ENCODE measurements at regions of chrX and their contacts with region 1.

Region 1: DNA sequence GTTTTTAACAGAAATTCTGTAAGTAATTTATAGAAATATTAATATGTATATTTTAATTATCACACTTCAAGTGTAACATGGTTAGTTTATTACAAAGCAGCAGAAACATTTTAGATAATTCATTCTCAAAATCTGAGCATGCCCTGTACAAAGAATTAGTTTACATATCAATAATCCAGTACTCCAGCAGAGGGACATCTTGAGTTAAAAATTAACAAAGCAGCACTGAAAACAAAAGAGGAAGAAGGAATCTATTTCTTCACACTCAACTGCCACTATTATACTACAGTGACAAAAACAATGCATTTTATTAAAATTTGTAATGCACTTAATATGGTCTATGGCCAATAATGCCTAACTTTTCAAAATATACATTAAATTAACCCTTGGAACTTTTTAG is 179.1 kb upstream of the KLHL4 start:
- DNase-seq: peak in 2 of 4 experiments; percentile 2 to 20
- ATAC-seq: peak; percentile 53; the same call in 1 of the 3 replicates
- H3K4me3 ChIP-seq: no peak overlapping the region
- H3K27ac ChIP-seq: no peak overlapping the region
- H3K4me1 ChIP-seq: no peaks in the 10 kb centered on the region
- H3K27me3 ChIP-seq: no peaks in the 10 kb centered on the region
- CTCF ChIP-seq: peak in 1 of 3 experiments; percentile 34; a peak in 1 of 6 replicates
- EP300 ChIP-seq: no peak
- POLR2A ChIP-seq: no peak
- RAD21 ChIP-seq: peak; percentile 57 to 66

Region 2: GRCh38 chrX:87236830-87237440 is 101.6 kb before region 1 on chrX:
- CTCF ChIA-PET with region 1: no interaction called
- POLR2A ChIA-PET with region 1: no interaction called
- in situ Hi-C with region 1: no loop called
- intact Hi-C with region 1: no loop called
- DNase-seq: no peak
- ATAC-seq: no peak
- H3K4me3 ChIP-seq: no peak overlapping the region
- H3K27ac ChIP-seq: no peak overlapping the region
- H3K4me1 ChIP-seq: no peaks in the 10 kb centered on the region
- H3K27me3 ChIP-seq: no peaks in the 10 kb centered on the region
- CTCF ChIP-seq: no peak
- EP300 ChIP-seq: no peak
- POLR2A ChIP-seq: no peak
- RAD21 ChIP-seq: no peak

Region 3: GRCh38 chrX:87272491-87272890 is 66.0 kb before region 1 on chrX:
- CTCF ChIA-PET with region 1: no interaction called
- POLR2A ChIA-PET with region 1: no interaction called
- in situ Hi-C with region 1: no loop called
- intact Hi-C with region 1: no loop called
- DNase-seq: no peak
- ATAC-seq: no peak
- H3K4me3 ChIP-seq: no peak overlapping the region
- H3K27ac ChIP-seq: no peak overlapping the region
- H3K4me1 ChIP-seq: no peaks in the 10 kb centered on the region
- H3K27me3 ChIP-seq: no peaks in the 10 kb centered on the region
- CTCF ChIP-seq: no peak
- EP300 ChIP-seq: no peak
- POLR2A ChIP-seq: no peak
- RAD21 ChIP-seq: no peak

Region 4: DNA sequence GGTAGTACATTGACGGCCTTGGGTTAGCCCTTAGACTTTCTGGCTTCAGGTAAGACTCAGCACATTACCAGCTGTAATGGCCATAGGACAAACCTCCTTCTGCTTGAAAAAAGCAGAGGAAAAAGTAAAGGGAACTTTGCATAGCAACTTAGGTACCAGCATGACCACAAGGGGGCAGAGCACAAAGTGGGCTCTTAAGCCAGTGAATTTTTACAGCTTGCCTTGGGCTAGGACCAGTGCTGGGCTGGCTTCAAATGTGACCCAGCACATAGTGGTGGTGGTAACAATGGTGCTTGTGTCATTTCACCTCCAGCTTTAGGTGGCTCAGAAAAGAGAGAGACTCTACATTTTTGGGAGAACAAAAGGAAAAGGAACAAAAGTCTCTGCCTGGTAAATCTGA is 245.2 kb after region 1 on chrX:
- CTCF ChIA-PET with region 1: no interaction called
- POLR2A ChIA-PET with region 1: no interaction called
- in situ Hi-C with region 1: no loop called
- intact Hi-C with region 1: loop called (anchors 5 kb)
- DNase-seq: peak in 2 of 4 experiments; percentile 8 to 47
- ATAC-seq: peak; percentile 54
- H3K4me3 ChIP-seq: no peak overlapping the region
- H3K27ac ChIP-seq: no peak overlapping the region
- H3K4me1 ChIP-seq: peaks cover 0 to 3% of the 10 kb centered on the region in 2 experiments; a peak in 2 of 5 replicates
- H3K27me3 ChIP-seq: no peaks in the 10 kb centered on the region
- CTCF ChIP-seq: peak; percentile 21 to 32 (median 21); a peak in 1 of 6 replicates
- EP300 ChIP-seq: no peak
- POLR2A ChIP-seq: no peak
- RAD21 ChIP-seq: no peak

Region 5: GRCh38 chrX:87755493-87755892 is 417.0 kb after region 1 on chrX:
- CTCF ChIA-PET with region 1: no interaction called
- POLR2A ChIA-PET with region 1: no interaction called
- in situ Hi-C with region 1: no loop called
- intact Hi-C with region 1: no loop called
- DNase-seq: no peak
- ATAC-seq: no peak
- H3K4me3 ChIP-seq: no peak overlapping the region
- H3K27ac ChIP-seq: no peak overlapping the region
- H3K4me1 ChIP-seq: no peaks in the 10 kb centered on the region
- H3K27me3 ChIP-seq: no peaks in the 10 kb centered on the region
- CTCF ChIP-seq: no peak
- EP300 ChIP-seq: no peak
- POLR2A ChIP-seq: no peak
- RAD21 ChIP-seq: no peak